Posterior cingulate gyrus (tissue), 11 donors: ENCODE measurements at regions of chr4 and their contacts with region 1.

Region 1: GRCh38 chr4:18593445-18594002 is 572.0 kb upstream of the LCORL start:
- DNase-seq: peak in 7 of 10 donors; percentile 36 to 85 (median 68)

Region 2: GRCh38 chr4:17544205-17544604 is 1049.3 kb before region 1 on chr4:
- intact Hi-C with region 1: loop called (anchors 2 kb)
- DNase-seq: peak; percentile 41 to 98 (median 78)

Region 3: GRCh38 chr4:17817020-17817419 is 776.5 kb before region 1 on chr4:
- intact Hi-C with region 1: loop called (anchors 1 kb)
- DNase-seq: no peak

Region 4: GRCh38 chr4:17934286-17934685 is 659.2 kb before region 1 on chr4:
- intact Hi-C with region 1: loop called (anchors 2 kb)
- DNase-seq: no peak

Region 5: GRCh38 chr4:18021722-18022571 is 571.6 kb before region 1 on chr4 and contains the start of gene LCORL:
- intact Hi-C with region 1: loop called (anchors 5 kb)
- DNase-seq: peak; percentile 82 to 99 (median 92)

Region 6: GRCh38 chr4:18366892-18367291 is 226.6 kb before region 1 on chr4:
- intact Hi-C with region 1: loop called (anchors 5 kb)
- DNase-seq: no peak